ENCODE measurements at regions of chr6 and their contacts with region 1.

Region 1: DNA sequence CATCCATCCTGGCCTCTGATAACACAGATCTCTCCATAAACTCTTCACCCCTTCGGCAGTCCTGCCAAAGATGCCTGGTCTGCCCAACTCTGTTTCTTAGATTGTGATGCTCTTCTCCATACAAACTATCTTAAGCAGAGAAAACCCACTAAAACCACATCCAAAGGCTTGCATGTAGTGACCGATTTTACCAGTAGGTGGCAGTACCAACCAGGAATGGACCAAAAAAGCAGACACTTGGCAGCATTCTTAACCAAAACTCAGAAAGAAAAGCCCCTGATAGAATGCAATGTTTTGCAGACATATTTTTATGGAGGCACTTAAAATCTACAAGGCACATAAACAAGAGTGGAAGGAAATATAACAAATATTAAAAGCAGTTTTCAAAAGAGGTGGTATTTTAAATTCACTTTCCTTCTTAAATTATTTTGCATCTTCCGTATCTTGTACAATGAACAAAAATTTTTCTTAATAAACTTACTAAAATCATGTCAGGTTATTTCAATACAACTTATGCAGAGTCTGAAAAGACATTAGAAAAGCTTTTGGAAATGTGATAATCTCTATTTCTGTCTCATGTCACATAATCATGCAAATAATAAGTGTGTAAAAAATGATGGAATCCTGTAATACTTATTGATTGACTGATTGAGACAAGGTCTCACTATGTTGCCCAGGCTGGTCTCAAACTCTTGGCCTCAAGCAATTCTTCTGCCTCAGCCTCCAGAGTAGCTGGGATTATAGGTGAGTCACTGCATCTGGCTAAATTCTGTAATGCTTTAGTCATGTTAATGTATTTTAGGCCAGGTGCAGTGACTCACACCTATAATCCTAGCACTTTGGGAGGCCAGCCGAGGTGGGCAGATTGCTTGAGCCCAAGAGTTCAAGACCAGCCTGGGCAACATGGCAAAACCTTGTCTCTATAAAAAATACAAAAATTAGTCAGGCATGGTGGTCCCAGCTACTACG is 29.4 kb downstream of the LRP11 start:
- DNase-seq: no peak
- H3K4me3 ChIP-seq: no peak overlapping the region
- H3K27ac ChIP-seq: peak overlapping the region; percentile 31
- H3K27me3 ChIP-seq: no peaks in the 10 kb centered on the region
- CTCF ChIP-seq: peak; percentile 93

Region 2: GRCh38 chr6:149846321-149846720 is 11.5 kb after region 1 on chr6:
- CTCF ChIA-PET with region 1: interaction called, 22 read pairs
- POLR2A ChIA-PET with region 1: no interaction called
- DNase-seq: peak; percentile 80
- H3K4me3 ChIP-seq: no peak overlapping the region
- H3K27ac ChIP-seq: peak overlapping the region; percentile 83
- H3K27me3 ChIP-seq: no peaks in the 10 kb centered on the region
- CTCF ChIP-seq: no peak

Region 3: GRCh38 chr6:149863697-149864577 is 29.1 kb after region 1 on chr6 and contains the start of gene LRP11:
- CTCF ChIA-PET with region 1: interaction called, 21 read pairs
- POLR2A ChIA-PET with region 1: no interaction called
- DNase-seq: no peak
- H3K4me3 ChIP-seq: peak within 1 kb of the TSS; percentile 51
- H3K27ac ChIP-seq: peak within 1 kb of the TSS; percentile 80
- H3K27me3 ChIP-seq: no peaks in the 10 kb centered on the region
- CTCF ChIP-seq: no peak
- polyA plus RNA-seq, gene LRP11: 64.3 and 71.0 TPM in 2 replicates

Region 4: GRCh38 chr6:149925253-149925973 is 90.6 kb after region 1 on chr6:
- CTCF ChIA-PET with region 1: interaction called, 18 read pairs
- POLR2A ChIA-PET with region 1: interaction called, 4 read pairs
- DNase-seq: no peak
- H3K4me3 ChIP-seq: peak overlapping the region; percentile 53
- H3K27ac ChIP-seq: no peak overlapping the region
- H3K27me3 ChIP-seq: peaks cover 16% of the 10 kb centered on the region
- CTCF ChIP-seq: no peak

Region 5: DNA sequence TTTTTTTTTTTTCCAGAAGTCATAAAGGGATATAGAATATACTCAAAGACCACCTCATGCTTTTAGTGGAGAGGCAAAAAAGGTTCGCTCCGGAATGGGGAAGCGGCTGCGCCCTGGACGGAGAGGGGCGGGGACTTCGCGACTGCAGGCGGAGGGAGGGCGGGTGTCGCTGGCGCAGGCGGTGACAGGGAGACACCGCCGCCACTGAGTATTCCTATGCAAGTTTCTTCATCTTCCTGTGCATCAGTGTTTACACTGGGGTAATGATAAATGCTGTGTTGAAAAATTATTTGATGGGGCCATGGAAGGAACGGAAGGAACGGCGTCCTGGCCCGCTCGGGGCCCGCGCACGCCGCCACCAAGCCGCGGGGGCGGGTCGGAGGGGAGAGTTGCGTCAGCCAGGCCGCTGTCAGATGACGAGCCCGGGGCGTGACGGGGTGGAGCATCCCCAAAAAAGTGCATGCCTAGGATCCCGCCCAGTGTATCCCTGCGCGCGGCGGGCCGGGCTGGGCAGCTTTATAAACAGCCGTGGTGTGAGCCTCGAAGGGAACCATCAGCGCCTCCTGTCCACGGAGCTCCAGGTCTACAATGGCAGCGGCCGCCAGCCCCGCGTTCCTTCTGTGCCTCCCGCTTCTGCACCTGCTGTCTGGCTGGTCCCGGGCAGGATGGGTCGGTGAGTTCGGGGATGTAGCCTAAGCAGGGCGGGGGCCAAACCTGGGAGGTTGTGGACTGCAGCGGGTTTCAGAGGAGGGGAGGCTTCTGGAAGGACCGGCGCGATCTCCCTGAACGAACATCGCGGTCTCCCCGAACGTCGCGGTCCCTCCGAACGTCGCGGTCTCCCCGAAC is 128.9 kb after region 1 on chr6 and contains the start of gene ULBP1:
- CTCF ChIA-PET with region 1: no interaction called
- POLR2A ChIA-PET with region 1: no interaction called
- DNase-seq: peak; percentile 66
- H3K4me3 ChIP-seq: peak within 1 kb of the TSS; percentile 64
- H3K27ac ChIP-seq: peak within 1 kb of the TSS; percentile 57
- H3K27me3 ChIP-seq: peaks cover 43% of the 10 kb centered on the region
- CTCF ChIP-seq: no peak; the same call in 1 of the 2 replicates
- polyA plus RNA-seq, gene ULBP1: 2.6 and 2.8 TPM in 2 replicates